PC-9 (cell line): ENCODE measurements at regions of chr13 and their contacts with region 1.

Region 1: GRCh38 chr13:108813771-108814170 is 184.4 kb downstream of the MYO16 start:
- DNase-seq: no peak
- H3K4me3 ChIP-seq: no peak overlapping the region
- H3K27ac ChIP-seq: no peak overlapping the region
- H3K4me1 ChIP-seq: peaks cover 32% of the 10 kb centered on the region
- H3K27me3 ChIP-seq: no peaks in the 10 kb centered on the region
- CTCF ChIP-seq: no peak

Region 2: DNA sequence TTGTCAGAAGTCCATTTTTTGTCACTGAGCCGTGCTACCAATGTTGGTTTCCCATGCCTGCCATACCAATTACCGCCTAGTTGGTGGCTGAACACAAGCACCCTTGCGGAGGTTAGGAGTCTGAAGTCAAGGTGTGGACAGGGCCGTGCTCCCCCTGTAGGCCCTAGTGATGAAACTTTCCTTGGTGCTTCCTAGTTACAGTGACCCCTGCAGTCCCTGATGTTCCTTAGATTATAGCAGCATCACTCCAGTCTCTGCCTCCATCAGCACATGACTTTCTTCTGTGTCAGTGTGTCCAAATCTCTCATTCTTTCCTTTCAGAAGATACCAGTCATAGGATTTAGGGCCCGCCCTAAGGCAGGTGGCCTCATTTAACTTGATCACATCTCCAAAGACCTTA is 85.4 kb before region 1 on chr13:
- CTCF ChIA-PET with region 1: interaction called, 12 read pairs
- POLR2A ChIA-PET with region 1: no interaction called
- intact Hi-C with region 1: no loop called
- DNase-seq: no peak
- H3K4me3 ChIP-seq: no peak overlapping the region
- H3K27ac ChIP-seq: no peak overlapping the region
- H3K4me1 ChIP-seq: no peaks in the 10 kb centered on the region
- H3K27me3 ChIP-seq: no peaks in the 10 kb centered on the region
- CTCF ChIP-seq: no peak